ENCODE measurements at regions of chr5 and their contacts with region 1.

Region 1: GRCh38 chr5:163347671-163348070 is 89.7 kb upstream of the CCNG1 start:
- DNase-seq: peak; percentile 70
- H3K4me3 ChIP-seq: no peak overlapping the region
- H3K27ac ChIP-seq: no peak overlapping the region
- H3K4me1 ChIP-seq: no peaks in the 10 kb centered on the region
- CTCF ChIP-seq: peak; percentile 99

Region 2: GRCh38 chr5:161851691-161852299 is 1495.9 kb before region 1 on chr5:
- CTCF ChIA-PET with region 1: no interaction called
- POLR2A ChIA-PET with region 1: no interaction called
- intact Hi-C with region 1: loop called (anchors 2 kb)
- DNase-seq: peak; percentile 2
- H3K4me3 ChIP-seq: no peak overlapping the region
- H3K27ac ChIP-seq: no peak overlapping the region
- H3K4me1 ChIP-seq: no peaks in the 10 kb centered on the region
- CTCF ChIP-seq: peak; percentile 76

Region 3: GRCh38 chr5:163079618-163080017 is 268.1 kb before region 1 on chr5:
- CTCF ChIA-PET with region 1: no interaction called
- POLR2A ChIA-PET with region 1: no interaction called
- intact Hi-C with region 1: loop called (anchors 10 kb)
- DNase-seq: peak; percentile 5
- H3K4me3 ChIP-seq: no peak overlapping the region
- H3K27ac ChIP-seq: no peak overlapping the region
- H3K4me1 ChIP-seq: no peaks in the 10 kb centered on the region
- CTCF ChIP-seq: peak; percentile 75